ENCODE measurements at regions of chr14 and their contacts with region 1.

Region 1: DNA sequence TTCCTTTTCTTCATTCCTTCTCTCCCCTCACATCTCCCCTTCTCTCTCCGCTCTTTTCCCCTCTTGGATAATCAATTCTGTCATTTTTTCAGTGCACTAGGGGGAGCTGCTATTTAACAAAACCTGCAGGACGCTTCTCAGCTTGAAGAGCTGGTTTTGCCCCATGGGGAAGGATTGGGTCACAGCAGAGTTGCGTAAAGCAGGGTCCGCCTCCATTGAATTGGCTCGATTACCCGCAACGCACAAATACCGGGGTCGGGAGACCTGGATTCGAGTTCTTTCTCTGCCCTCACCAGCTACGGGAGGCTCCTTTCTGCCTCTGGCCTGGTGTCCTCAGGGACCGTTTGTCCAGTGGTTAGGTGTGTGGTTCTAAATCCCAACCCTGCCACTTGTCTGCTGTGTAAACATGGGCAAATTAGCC is 42.1 kb upstream of the CHGA start:
- DNase-seq: peak; percentile 41 to 58
- H3K4me3 ChIP-seq: 0 out of 8 replicates have a peak overlapping the region, but pooled peaks of 1 of the 4 experiments have one; percentile 19
- H3K27ac ChIP-seq: no peak overlapping the region
- H3K4me1 ChIP-seq: peaks cover 0 to 12% (median 5%) of the 10 kb centered on the region in 4 experiments; a peak in 5 of 7 replicates
- H3K27me3 ChIP-seq: no peaks in the 10 kb centered on the region; a peak in 1 of 7 replicates
- CTCF ChIP-seq: peak in 2 of 3 experiments; percentile 59 to 71; a peak in 3 of 4 replicates
- EP300 ChIP-seq: no peak
- POLR2A ChIP-seq: no peak
- RAD21 ChIP-seq: peak; percentile 79 to 81

Region 2: DNA sequence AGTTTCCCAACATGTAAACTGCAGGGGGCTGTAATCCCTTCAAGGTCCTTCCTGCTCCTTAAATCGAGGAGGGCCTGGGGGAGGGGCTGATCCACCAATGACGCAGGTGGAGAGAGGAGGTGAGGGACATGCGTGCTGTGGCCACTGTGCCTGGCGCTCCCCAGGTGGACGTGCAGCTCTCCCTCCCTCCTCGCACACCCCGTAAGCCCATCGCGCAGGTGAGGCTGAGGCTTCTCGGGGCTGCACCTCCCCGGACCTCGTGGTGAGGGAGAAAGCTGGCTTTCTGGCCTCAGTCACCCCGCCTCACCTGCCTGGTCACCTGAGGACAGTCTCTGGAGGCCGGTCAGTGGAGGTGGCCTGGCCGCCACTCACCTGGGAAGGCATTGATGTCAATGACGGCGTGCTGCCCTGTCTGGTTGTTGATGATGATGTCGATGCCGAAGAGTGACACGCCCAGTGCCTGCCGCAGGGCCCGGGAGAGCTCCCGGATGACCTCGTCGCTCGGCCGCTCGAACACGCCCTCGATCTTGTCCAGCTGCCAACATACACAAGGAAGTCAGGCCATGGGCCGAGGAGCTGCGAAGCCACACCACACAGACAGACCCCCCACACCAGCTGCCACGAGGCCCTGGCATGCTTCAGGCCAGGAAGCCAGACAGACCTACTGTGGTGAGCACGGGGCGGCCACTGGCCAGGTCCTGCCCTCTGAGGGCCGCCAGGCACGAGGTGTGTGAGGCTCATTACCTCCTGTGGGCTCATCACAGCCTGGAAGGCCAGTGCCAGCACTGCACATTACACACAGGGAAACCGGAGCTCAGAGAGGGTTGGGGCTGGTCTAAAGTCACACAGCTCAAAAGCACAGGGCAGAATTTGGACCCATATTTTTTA is 65.3 kb after region 1 on chr14:
- CTCF ChIA-PET with region 1: interaction called, 13 read pairs
- POLR2A ChIA-PET with region 1: no interaction called
- DNase-seq: no peak
- H3K4me3 ChIP-seq: no peak overlapping the region
- H3K27ac ChIP-seq: no peak overlapping the region
- H3K4me1 ChIP-seq: no peaks in the 10 kb centered on the region
- H3K27me3 ChIP-seq: no peaks in the 10 kb centered on the region
- CTCF ChIP-seq: no peak
- EP300 ChIP-seq: no peak
- POLR2A ChIP-seq: no peak
- RAD21 ChIP-seq: no peak